Heart left ventricle (tissue), 16 donors: ENCODE measurements at regions of chr1 and their contacts with region 1.

Region 1: DNA sequence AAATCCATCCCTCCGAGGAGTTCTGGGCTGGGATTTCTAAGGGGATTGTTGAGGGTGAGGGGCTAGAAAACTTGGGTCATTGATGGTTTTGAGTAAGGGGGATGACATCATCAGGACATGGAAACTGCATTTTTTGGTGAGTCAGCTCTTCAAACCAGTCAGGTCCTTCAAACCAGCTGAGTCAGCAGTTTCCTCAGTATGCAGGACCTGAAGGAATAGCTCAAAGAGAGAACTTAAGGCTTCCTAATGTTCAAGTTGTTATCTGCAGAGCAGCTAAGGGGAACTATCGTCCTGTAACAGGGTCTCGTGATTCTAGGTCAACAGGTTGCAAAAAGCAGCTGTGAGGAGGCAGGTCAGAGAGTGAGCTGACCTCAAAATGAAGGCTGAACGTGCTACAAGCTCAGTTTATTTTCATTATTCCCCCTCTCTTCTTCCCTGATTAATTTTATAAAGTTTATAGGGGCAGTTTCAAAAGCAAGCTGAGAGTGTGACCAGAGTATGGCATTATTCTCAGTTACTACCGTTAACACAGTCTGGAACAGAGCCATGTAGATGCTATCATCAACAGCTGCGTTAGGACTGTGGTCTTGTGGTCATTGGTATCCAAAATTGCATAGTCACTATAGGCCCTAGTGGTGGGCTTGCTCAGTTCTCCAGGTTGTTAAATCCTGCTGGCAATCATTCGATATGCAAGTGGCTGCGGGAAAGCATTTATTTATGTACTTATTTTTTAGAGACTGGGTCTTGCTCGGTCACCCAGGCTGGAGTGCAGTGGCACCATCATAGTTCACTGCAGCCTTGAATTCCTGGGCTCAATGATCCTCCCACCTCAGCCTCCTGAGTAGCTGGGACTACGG is 10.7 kb upstream of the SDC3 start:
- DNase-seq: no peak
- ATAC-seq: peak in 2 of 4 donors; percentile 34 to 38
- H3K4me3 ChIP-seq: no peak overlapping the region
- H3K27ac ChIP-seq: peak overlapping the region in 1 of 12 donors; percentile 86
- H3K4me1 ChIP-seq: peaks cover 0 to 27% (median 0%) of the 10 kb centered on the region in 12 donors
- H3K27me3 ChIP-seq: no peaks in the 10 kb centered on the region
- CTCF ChIP-seq: no peak
- POLR2A ChIP-seq: no peak

Region 2: DNA sequence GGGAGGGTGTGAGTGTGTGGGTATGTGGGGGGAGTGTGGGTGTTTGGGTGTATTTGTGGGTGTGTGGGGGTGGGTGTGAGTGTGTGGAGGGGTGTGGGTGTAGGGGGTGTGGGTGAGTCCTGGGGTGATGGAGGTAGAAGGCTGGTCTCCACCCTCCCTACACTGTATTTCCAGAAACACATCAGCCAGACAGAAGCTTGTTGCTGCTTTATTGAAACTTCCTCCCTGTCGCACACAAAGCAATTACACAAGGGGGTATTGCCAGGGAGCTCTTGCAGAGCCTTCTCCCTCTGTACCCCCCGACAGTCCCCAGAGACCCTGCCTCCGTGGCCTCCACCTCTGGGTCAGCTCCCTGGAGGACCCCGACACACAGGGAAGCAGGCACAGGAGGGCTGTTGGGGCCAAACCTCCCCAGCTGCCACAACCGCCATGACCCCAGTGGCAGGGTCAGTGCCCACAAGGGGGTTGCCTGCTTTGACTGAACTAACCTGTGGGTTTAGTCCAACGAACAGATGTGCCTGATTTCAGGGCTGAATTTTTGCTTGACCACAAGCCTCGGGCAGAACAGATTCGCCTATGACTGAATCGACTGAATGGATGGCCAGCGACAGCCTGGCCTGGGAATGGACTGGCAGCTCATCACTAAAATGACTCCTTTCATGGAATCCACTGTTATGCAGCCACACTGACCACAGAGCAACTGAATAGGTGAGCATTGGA is 186.8 kb before region 1 on chr1:
- intact Hi-C with region 1: loop called in 2 of 10 experiments (anchors 5 to 10 kb)
- DNase-seq: no peak
- ATAC-seq: no peak
- H3K4me3 ChIP-seq: no peak overlapping the region
- H3K27ac ChIP-seq: peak overlapping the region in 1 of 12 donors; percentile 10
- H3K4me1 ChIP-seq: peaks cover 0 to 8% (median 0%) of the 10 kb centered on the region in 12 donors
- H3K27me3 ChIP-seq: no peaks in the 10 kb centered on the region
- CTCF ChIP-seq: no peak
- POLR2A ChIP-seq: no peak

Region 3: GRCh38 chr1:30801771-30802198 is 117.5 kb before region 1 on chr1:
- intact Hi-C with region 1: loop called in 1 of 10 experiments (anchors 1 kb)
- DNase-seq: peak; percentile 75 to 92 (median 81)
- ATAC-seq: peak; percentile 58 to 77 (median 66)
- H3K4me3 ChIP-seq: peak overlapping the region in 1 of 12 donors; percentile 33
- H3K27ac ChIP-seq: peak overlapping the region in 1 of 12 donors; percentile 46
- H3K4me1 ChIP-seq: peaks cover 3 to 43% (median 16%) of the 10 kb centered on the region in 12 donors
- H3K27me3 ChIP-seq: peaks cover 0 to 15% (median 0%) of the 10 kb centered on the region in 9 donors
- CTCF ChIP-seq: peak; percentile 93 to 99 (median 96)
- POLR2A ChIP-seq: no peak

Region 4: GRCh38 chr1:31038360-31038759 is 119.1 kb after region 1 on chr1:
- intact Hi-C with region 1: no loop called
- DNase-seq: no peak
- ATAC-seq: no peak
- H3K4me3 ChIP-seq: no peak overlapping the region
- H3K27ac ChIP-seq: no peak overlapping the region
- H3K4me1 ChIP-seq: peaks cover 0 to 80% (median 42%) of the 10 kb centered on the region in 12 donors
- H3K27me3 ChIP-seq: no peaks in the 10 kb centered on the region
- CTCF ChIP-seq: no peak
- POLR2A ChIP-seq: no peak